ENCODE measurements at regions of chr18 and their contacts with region 1.

Region 1: GRCh38 chr18:3541549-3542386 is 91.8 kb downstream of the TGIF1 start:
- DNase-seq: no peak
- ATAC-seq: 0 out of 2 replicates have a peak, but pooled peaks have one; percentile 66
- H3K4me3 ChIP-seq: no peak overlapping the region
- H3K27ac ChIP-seq: peak overlapping the region; percentile 64
- H3K4me1 ChIP-seq: peaks cover 17% of the 10 kb centered on the region
- H3K27me3 ChIP-seq: no peaks in the 10 kb centered on the region
- CTCF ChIP-seq: no peak

Region 2: DNA sequence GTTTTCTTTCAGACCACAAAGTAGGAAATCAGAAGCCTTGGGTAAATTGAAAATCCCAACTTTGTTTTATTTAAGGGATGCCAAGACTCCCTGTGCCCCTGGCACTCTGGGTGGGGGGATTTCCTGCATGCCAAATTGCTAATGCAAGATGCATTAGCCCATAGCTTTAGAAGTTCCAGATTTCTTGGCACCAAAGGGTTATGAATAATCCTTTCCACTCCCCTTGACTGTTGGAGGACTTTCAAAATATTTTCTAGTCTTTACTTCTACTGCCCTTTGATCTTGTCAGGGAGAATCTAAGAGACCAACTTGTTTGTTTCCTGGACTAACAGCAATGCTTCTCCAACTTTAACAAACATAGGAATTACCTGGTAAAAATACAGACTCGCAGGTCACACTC is 173.6 kb before region 1 on chr18:
- CTCF ChIA-PET with region 1: no interaction called
- POLR2A ChIA-PET with region 1: interaction called, 17 read pairs
- in situ Hi-C with region 1: no loop called
- intact Hi-C with region 1: no loop called
- DNase-seq: no peak
- ATAC-seq: peak; percentile 42; the same call in 1 of the 2 replicates
- H3K4me3 ChIP-seq: no peak overlapping the region
- H3K27ac ChIP-seq: peak overlapping the region; percentile 29; the same call in 1 of the 2 replicates
- H3K4me1 ChIP-seq: 0 out of 2 replicates have a peak, but pooled peaks cover 3% of the 10 kb centered on the region
- H3K27me3 ChIP-seq: no peaks in the 10 kb centered on the region
- CTCF ChIP-seq: no peak

Measured in Panc1 (cell line).